Posterior cingulate gyrus (tissue), 11 donors: ENCODE measurements at regions of chr5 and their contacts with region 1.

Region 1: GRCh38 chr5:54217826-54218503 is 92.4 kb downstream of the ARL15 start:
- DNase-seq: peak in 1 of 10 donors; percentile 15

Region 2: DNA sequence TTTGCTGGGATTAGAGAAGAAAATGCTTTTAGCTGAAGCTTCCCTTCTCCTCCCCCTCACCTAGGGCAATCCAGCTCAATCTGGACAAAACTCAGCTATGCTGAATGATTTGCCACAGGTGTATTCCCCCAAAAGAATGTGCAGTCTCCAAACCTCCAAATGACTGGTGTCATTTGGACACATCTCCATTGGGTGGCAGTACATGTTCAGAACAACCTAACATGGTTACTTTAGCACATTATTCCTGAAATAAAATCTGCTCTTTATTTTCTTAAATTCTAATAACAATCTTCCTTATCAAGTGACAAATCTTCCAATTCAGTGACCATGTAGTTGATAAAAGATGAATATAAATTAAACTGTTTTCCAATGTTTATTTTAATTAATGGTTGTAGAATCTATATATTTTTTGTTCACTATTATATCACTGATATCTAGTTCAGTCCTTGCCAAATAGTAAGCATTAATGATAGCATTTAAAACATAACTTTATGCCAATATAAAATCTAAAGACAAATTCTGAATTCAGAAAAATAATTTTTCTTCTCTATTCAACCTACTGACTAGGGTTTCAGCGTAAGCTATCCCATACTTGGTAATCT is 1047.1 kb before region 1 on chr5:
- intact Hi-C with region 1: loop called (anchors 2 kb)
- DNase-seq: no peak

Region 3: DNA sequence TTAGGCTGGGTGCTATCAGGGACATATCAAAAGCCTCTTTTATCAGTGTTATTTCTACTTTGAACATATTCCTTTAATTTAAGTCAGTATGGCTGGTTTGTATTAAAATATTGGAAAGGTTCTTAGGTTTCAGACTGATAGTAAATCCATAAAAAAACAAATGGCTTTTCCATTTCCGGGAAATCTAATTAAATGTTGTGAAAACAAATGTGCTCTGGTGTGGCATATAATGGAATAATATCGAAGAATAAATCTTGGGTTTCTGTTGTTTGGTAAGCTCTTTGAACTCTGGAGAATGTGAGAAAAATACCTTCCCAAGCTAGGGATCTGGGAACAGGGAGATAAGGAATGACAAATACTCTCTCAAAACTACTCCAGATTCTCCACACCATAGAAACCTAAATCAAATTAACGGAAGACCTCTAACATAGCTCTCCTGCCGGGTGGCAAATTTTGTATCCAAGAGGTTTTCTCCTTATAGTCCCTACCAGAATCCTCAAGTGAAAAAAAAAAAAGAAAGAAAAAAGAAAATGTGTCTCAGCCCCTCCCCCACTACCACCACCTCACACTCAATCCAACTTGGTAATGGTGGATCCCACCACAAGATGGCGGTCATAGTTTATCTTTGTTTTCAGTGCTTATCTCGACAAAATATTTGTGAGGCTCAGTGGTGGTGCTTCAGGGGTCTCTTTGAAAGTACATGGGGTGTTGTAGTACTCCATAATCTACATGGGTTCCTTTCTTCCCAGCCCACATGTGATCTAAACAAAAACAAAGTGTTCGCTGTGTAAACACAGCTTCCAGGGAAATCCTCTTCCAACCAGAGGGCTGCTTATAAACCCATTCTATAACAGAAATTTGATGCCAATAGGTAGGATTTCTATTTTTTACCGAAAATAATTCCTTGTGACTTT is 792.1 kb before region 1 on chr5:
- intact Hi-C with region 1: loop called (anchors 2 kb)
- DNase-seq: peak in 1 of 10 donors; percentile 10

Region 4: GRCh38 chr5:53478411-53479044 is 739.4 kb before region 1 on chr5:
- intact Hi-C with region 1: loop called (anchors 5 kb)
- DNase-seq: peak in 2 of 10 donors; percentile 10 to 70